PC-3 (cell line): ENCODE measurements at regions of chr4 and their contacts with region 1.

Region 1: DNA sequence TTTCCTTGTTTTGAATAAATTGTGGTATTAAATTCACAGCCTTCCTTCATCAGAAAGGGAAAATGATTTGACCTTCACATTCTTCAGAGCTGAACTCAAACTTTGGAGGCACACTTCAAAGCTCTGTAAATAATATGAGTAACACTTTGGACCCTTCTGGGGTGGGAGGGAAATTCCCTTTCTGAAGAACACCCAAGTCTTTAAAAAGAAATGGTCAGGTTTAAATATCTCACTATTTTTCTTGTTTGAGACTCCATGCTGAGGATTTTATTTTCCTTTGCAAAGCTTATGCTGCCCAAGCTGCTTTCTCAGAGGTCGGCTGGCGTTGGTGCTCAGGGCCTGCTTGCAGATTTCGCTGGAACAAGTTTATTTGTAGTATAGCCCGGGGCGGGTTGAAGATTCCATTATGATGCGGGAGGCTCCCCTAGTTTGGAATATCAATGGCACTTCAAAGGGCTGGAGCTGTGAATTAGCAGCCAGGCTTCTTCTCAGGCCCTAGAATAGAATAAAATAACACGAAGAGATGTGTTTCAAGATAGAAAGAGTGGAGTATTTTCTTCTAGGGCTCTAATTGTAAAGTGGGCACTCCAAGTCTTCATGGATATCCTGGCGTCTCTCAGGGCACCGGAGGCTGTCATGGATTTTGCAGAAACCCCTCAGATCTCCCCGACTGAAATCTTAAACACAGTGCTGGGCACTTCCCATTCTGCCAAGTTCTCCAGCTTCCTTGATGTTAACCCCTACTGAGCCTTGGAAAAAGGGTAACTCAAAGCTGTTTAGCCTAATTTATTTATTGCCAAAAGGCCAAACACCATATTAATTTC is 315.6 kb downstream of the GPAT3 start:
- DNase-seq: peak; percentile 44
- ATAC-seq: no peak
- H3K4me3 ChIP-seq: no peak overlapping the region
- H3K27ac ChIP-seq: peak overlapping the region; percentile 45
- H3K4me1 ChIP-seq: peaks cover 42% of the 10 kb centered on the region
- H3K27me3 ChIP-seq: no peaks in the 10 kb centered on the region
- CTCF ChIP-seq: no peak

Region 2: GRCh38 chr4:83889802-83890201 is 38.3 kb after region 1 on chr4:
- CTCF ChIA-PET with region 1: no interaction called
- POLR2A ChIA-PET with region 1: no interaction called
- intact Hi-C with region 1: loop called (anchors 2 kb)
- DNase-seq: peak; percentile 73
- ATAC-seq: peak; percentile 81
- H3K4me3 ChIP-seq: no peak overlapping the region; the same call in 1 of the 2 replicates
- H3K27ac ChIP-seq: peak overlapping the region; percentile 53
- H3K4me1 ChIP-seq: peaks cover 22% of the 10 kb centered on the region
- H3K27me3 ChIP-seq: no peaks in the 10 kb centered on the region
- CTCF ChIP-seq: no peak

Region 3: DNA sequence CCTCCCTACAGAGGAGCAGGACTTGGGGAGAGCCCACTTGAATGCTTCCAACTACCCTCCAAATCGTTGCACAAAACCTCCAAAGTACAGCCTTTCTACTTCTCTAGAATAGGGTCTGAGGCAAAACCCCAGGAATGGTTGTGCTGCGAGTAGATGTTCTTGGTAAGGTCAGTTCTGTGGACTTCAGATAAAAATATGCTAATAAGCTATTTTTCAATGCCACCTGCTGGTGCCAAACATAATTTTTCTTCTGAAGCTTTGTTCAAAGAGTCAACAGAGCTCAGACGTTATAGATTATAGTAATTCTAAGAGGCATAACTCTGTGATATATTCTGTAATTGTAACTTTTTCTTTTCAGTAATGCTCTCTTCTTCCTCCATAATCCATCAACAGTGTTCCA is 110.1 kb after region 1 on chr4:
- CTCF ChIA-PET with region 1: no interaction called
- POLR2A ChIA-PET with region 1: no interaction called
- intact Hi-C with region 1: no loop called
- DNase-seq: peak; percentile 55
- ATAC-seq: peak; percentile 63
- H3K4me3 ChIP-seq: no peak overlapping the region
- H3K27ac ChIP-seq: no peak overlapping the region
- H3K4me1 ChIP-seq: no peaks in the 10 kb centered on the region
- H3K27me3 ChIP-seq: no peaks in the 10 kb centered on the region
- CTCF ChIP-seq: peak; percentile 60